ENCODE measurements at regions of chr6 and their contacts with region 1.

Region 1: GRCh38 chr6:99425647-99426453 is 742 bp upstream of the PNISR start:
- DNase-seq: peak; percentile 92
- H3K4me3 ChIP-seq: peak overlapping the region; percentile 69
- H3K27ac ChIP-seq: peak overlapping the region; percentile 98
- H3K4me1 ChIP-seq: peaks cover 15% of the 10 kb centered on the region
- H3K27me3 ChIP-seq: no peaks in the 10 kb centered on the region
- CTCF ChIP-seq: peak; percentile 26

Region 2: GRCh38 chr6:99330159-99330558 is 95.7 kb before region 1 on chr6:
- intact Hi-C with region 1: loop called (anchors 5 kb)
- DNase-seq: peak; percentile 34
- H3K4me3 ChIP-seq: no peak overlapping the region
- H3K27ac ChIP-seq: no peak overlapping the region
- H3K4me1 ChIP-seq: no peaks in the 10 kb centered on the region
- H3K27me3 ChIP-seq: no peaks in the 10 kb centered on the region
- CTCF ChIP-seq: peak; percentile 67

Region 3: GRCh38 chr6:99514089-99514488 is 88.2 kb after region 1 on chr6:
- intact Hi-C with region 1: loop called (anchors 10 kb)
- DNase-seq: peak; percentile 20
- H3K4me3 ChIP-seq: peak overlapping the region; percentile 80
- H3K27ac ChIP-seq: no peak overlapping the region
- H3K4me1 ChIP-seq: peaks cover 4% of the 10 kb centered on the region
- H3K27me3 ChIP-seq: no peaks in the 10 kb centered on the region
- CTCF ChIP-seq: no peak

Region 4: DNA sequence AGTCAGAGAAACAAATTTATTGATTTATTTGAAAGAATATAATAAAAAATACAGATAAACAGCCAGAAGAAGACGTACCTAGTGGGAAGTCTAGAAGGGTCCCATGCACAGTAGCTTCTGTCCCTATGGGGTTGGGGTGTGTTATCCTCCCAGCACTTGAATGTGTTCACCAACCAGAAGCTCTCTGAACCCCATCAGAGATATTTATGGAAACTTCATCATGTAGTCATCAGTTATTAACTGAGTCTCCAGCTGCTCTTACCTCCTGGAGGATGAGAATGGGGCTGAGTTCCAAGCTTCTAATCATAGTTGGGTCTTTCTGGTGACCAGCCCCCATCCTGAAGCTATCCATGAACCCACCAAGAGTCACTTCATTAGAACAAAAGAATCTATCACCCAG is 104.8 kb after region 1 on chr6:
- intact Hi-C with region 1: no loop called
- DNase-seq: no peak
- H3K4me3 ChIP-seq: no peak overlapping the region
- H3K27ac ChIP-seq: no peak overlapping the region
- H3K4me1 ChIP-seq: no peaks in the 10 kb centered on the region
- H3K27me3 ChIP-seq: no peaks in the 10 kb centered on the region
- CTCF ChIP-seq: no peak